ENCODE measurements at regions of chr1 and their contacts with region 1.

Region 1: DNA sequence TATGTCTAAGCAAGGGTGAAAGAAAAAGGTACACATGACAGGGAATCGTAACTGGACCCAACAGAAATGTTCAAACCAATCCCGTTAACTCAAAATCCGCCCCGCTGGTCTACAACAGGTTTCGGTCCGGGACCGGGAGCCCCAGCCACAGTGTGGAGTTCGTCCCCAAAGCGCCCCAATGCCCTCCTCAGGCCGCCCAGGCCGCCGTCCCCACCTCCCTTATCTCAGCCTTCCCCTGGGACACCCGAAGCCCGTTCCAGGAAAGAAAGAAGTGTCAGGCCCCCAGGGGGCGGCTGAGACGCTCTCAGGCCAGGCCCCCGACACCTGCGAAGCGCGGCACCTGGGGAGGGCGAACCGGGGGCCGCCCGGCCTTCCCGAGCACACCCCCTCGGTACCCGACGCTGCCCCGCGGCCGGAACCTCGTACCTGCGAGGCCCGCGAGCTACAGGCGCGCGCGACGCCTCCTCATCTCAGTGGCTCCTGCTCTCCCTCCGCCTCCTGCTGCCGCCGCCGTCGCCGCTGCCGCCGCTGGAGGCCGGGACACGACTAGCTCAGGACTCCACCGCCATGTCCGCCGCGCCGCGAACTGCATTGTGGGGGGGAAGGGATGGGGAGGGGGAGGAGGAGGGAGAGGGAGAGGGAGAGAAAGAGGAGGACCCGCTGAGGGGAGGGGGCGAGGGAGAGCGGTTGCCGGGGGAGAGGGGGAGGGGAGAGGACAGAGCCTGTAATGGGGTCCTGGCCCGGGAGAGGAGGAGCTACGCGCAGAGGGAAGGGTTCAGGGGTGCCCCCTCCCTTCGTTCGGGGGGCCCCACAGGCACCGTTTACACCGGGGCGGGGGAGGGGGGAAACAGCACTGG is at the start of gene TUT4:
- DNase-seq: peak; percentile 48
- H3K4me3 ChIP-seq: peak within 1 kb of the TSS; percentile 80
- H3K27ac ChIP-seq: peak within 1 kb of the TSS; percentile 85
- H3K27me3 ChIP-seq: no peaks in the 10 kb centered on the region
- CTCF ChIP-seq: no peak
- polyA plus RNA-seq, gene TUT4: 29.3 and 30.0 TPM in 2 replicates

Region 2: GRCh38 chr1:52288286-52288685 is 264.4 kb before region 1 on chr1:
- CTCF ChIA-PET with region 1: no interaction called
- POLR2A ChIA-PET with region 1: no interaction called
- DNase-seq: no peak
- H3K4me3 ChIP-seq: no peak overlapping the region
- H3K27ac ChIP-seq: no peak overlapping the region
- H3K27me3 ChIP-seq: no peaks in the 10 kb centered on the region
- CTCF ChIP-seq: no peak

Region 3: DNA sequence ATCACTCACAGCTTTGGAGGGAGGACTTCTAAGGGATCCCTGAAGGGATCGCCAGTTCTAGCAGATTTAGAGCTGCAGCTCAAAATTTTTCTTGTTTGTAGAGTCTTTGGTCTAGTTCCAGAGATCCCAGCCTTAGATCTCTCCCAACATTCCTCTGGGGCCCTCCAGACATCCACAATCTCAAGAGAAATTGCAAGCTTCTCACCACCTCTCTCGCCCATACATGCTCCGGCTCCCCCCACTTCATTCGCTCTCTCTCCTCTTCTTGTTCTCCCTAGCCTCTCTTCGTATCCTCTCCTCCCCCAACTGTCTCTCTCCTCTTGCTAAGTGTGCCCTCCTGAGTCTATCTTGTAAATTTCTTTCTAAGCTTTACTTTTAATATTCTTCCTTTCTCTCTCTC is 15.2 kb after region 1 on chr1:
- CTCF ChIA-PET with region 1: interaction called, 4 read pairs
- POLR2A ChIA-PET with region 1: interaction called, 11 read pairs
- DNase-seq: no peak
- H3K4me3 ChIP-seq: no peak overlapping the region
- H3K27ac ChIP-seq: no peak overlapping the region
- H3K27me3 ChIP-seq: peaks cover 2% of the 10 kb centered on the region
- CTCF ChIP-seq: no peak

Region 4: DNA sequence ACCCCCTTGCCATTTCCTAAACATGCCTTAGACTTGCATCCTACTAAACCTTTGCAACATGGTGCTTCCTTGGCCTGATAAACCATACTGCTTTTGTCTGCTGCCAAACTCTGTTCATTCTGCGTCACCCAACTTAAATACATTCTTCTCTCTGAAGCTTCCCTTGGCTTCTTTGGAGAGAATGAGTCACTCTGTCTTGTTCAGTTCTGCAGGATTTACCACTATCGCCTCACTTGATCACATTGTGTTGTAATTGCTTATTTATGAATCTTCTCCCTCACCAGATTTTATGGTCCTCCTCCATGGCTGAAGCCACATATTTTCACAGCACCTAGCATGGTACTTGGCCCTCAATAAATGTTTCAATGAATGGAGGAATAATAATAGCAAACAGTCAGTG is 21.9 kb after region 1 on chr1:
- CTCF ChIA-PET with region 1: no interaction called
- POLR2A ChIA-PET with region 1: interaction called, 10 read pairs
- DNase-seq: peak; percentile 90
- H3K4me3 ChIP-seq: no peak overlapping the region
- H3K27ac ChIP-seq: no peak overlapping the region
- H3K27me3 ChIP-seq: no peaks in the 10 kb centered on the region
- CTCF ChIP-seq: no peak

Region 5: GRCh38 chr1:52697795-52698674 is 145.3 kb after region 1 on chr1 and contains the start of gene COA7:
- CTCF ChIA-PET with region 1: no interaction called
- POLR2A ChIA-PET with region 1: no interaction called
- DNase-seq: no peak
- H3K4me3 ChIP-seq: peak within 1 kb of the TSS; percentile 83
- H3K27ac ChIP-seq: peak within 1 kb of the TSS; percentile 65
- H3K27me3 ChIP-seq: no peaks in the 10 kb centered on the region
- CTCF ChIP-seq: no peak
- polyA plus RNA-seq, gene COA7: 12.0 and 13.8 TPM in 2 replicates